ENCODE measurements at regions of chr18 and their contacts with region 1.

Region 1: GRCh38 chr18:76398896-76399612 is 96.0 kb downstream of the ZNF516 start:
- DNase-seq: peak; percentile 34 to 90
- H3K4me3 ChIP-seq: no peak overlapping the region
- H3K27ac ChIP-seq: no peak overlapping the region
- H3K4me1 ChIP-seq: peaks cover 0 to 3% (median 1%) of the 10 kb centered on the region in 4 experiments; a peak in 4 of 7 replicates
- H3K27me3 ChIP-seq: no peaks in the 10 kb centered on the region
- CTCF ChIP-seq: peak; percentile 90 to 99 (median 96)
- EP300 ChIP-seq: no peak
- POLR2A ChIP-seq: no peak
- RAD21 ChIP-seq: peak; percentile 96 to 99

Region 2: GRCh38 chr18:76374330-76375281 is 24.4 kb before region 1 on chr18:
- CTCF ChIA-PET with region 1: interaction called, 12 read pairs
- POLR2A ChIA-PET with region 1: no interaction called
- DNase-seq: no peak
- H3K4me3 ChIP-seq: no peak overlapping the region
- H3K27ac ChIP-seq: no peak overlapping the region
- H3K4me1 ChIP-seq: peaks cover 0 to 4% (median 1%) of the 10 kb centered on the region in 4 experiments; a peak in 3 of 7 replicates
- H3K27me3 ChIP-seq: no peaks in the 10 kb centered on the region
- CTCF ChIP-seq: no peak
- EP300 ChIP-seq: no peak
- POLR2A ChIP-seq: no peak
- RAD21 ChIP-seq: no peak

Region 3: DNA sequence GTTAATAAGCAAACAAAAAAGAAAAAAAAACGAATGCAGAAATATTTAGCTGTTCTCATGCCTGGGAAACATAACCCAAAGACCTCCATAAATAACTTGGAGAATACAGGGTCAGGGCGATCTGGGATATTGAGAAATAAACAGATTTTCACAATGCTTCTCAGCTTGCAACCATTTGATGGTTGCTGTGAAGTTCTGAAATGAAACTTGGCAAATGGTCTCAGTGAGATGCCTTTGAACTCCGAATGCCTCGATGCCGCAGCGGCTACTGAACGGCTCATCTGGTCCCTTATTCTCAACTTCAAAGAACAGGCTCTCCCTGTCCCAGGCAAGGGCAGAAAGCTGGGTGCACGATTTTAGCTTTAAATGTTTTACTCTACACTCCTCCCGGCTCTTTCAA is 17.9 kb after region 1 on chr18:
- CTCF ChIA-PET with region 1: interaction called, 33 read pairs
- POLR2A ChIA-PET with region 1: no interaction called
- DNase-seq: peak in 1 of 2 experiments; percentile 31
- H3K4me3 ChIP-seq: no peak overlapping the region
- H3K27ac ChIP-seq: no peak overlapping the region
- H3K4me1 ChIP-seq: peaks cover 0 to 14% (median 3%) of the 10 kb centered on the region in 4 experiments; a peak in 3 of 7 replicates
- H3K27me3 ChIP-seq: no peaks in the 10 kb centered on the region
- CTCF ChIP-seq: no peak
- EP300 ChIP-seq: no peak
- POLR2A ChIP-seq: no peak
- RAD21 ChIP-seq: no peak

Region 4: GRCh38 chr18:76435316-76435989 is 36.4 kb after region 1 on chr18:
- CTCF ChIA-PET with region 1: interaction called, 11 read pairs
- POLR2A ChIA-PET with region 1: no interaction called
- DNase-seq: peak in 1 of 2 experiments; percentile 39
- H3K4me3 ChIP-seq: no peak overlapping the region
- H3K27ac ChIP-seq: no peak overlapping the region
- H3K4me1 ChIP-seq: peaks cover 0 to 4% (median 0%) of the 10 kb centered on the region in 4 experiments; a peak in 1 of 7 replicates
- H3K27me3 ChIP-seq: no peaks in the 10 kb centered on the region
- CTCF ChIP-seq: peak; percentile 45 to 54 (median 49)
- EP300 ChIP-seq: no peak
- POLR2A ChIP-seq: no peak
- RAD21 ChIP-seq: peak; percentile 35 to 50; a peak in 3 of 4 replicates

Region 5: DNA sequence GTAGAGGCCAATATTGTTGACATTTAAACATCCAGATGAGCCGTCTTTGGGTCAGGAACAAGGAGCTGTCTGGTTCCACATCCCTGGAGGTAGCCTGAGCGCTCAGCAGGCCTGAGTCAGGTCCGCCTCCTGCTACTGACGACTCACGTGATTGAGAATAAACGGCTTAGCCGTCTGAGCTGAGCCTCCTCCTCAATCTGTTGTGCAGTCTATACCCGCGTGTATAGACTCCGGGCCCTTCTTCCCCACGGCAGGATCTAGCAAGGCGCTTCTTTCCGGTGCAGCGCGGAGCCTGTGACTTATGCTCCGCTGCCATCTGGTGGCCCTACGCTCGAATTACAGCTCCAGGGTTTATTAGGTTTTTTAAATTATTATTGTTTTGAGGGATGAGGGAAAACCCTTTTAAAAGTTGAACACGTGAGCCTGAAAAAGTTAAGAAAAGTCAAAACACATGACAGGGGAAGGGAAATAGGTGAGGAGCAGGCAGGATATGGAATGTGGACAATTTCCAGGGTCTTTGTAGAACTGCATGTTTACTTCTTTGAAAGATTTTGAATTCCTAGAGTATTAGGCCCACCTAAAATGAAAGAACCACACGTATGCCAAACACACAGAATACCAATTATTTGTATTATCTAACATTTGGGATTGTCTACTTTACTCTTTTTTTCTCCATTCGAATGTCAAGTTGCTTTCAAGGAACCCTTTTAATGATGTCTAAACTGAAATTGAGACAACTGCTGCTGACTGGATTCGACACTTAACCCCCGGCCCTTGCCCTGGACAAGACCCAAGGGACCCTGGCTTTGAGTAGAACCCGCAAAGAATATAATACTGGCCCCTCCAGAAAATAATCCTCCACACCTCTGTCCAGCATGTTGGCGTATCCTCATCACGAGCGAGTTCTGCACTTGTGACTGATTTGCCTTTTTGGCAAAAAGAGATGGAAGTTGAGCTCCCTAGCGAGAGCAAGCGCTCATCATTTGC is 310.9 kb after region 1 on chr18:
- CTCF ChIA-PET with region 1: interaction called, 71 read pairs
- POLR2A ChIA-PET with region 1: no interaction called
- DNase-seq: peak; percentile 34 to 73
- H3K4me3 ChIP-seq: no peak overlapping the region
- H3K27ac ChIP-seq: no peak overlapping the region
- H3K4me1 ChIP-seq: no peaks in the 10 kb centered on the region; a peak in 1 of 7 replicates
- H3K27me3 ChIP-seq: no peaks in the 10 kb centered on the region
- CTCF ChIP-seq: peak; percentile 67 to 91 (median 79)
- EP300 ChIP-seq: no peak
- POLR2A ChIP-seq: no peak
- RAD21 ChIP-seq: peak; percentile 98 to 99

Region 6: GRCh38 chr18:76892832-76893231 is 493.8 kb after region 1 on chr18:
- CTCF ChIA-PET with region 1: no interaction called
- POLR2A ChIA-PET with region 1: no interaction called
- DNase-seq: no peak
- H3K4me3 ChIP-seq: no peak overlapping the region
- H3K27ac ChIP-seq: no peak overlapping the region
- H3K4me1 ChIP-seq: no peaks in the 10 kb centered on the region
- H3K27me3 ChIP-seq: no peaks in the 10 kb centered on the region
- CTCF ChIP-seq: no peak
- EP300 ChIP-seq: no peak
- POLR2A ChIP-seq: no peak
- RAD21 ChIP-seq: no peak

Measured in H1 (cell line).